B cell (primary cell): ENCODE measurements at regions of chr6 and their contacts with region 1.

Region 1: GRCh38 chr6:119978274-119978889 is 628.8 kb upstream of the MAN1A1 start:
- DNase-seq: peak; percentile 21
- ATAC-seq: no peak
- H3K4me3 ChIP-seq: no peak overlapping the region
- H3K4me3 Mint-ChIP-seq: no peak overlapping the region
- H3K27ac ChIP-seq: no peak overlapping the region
- H3K27ac Mint-ChIP-seq: no peak overlapping the region
- H3K4me1 ChIP-seq: no peaks in the 10 kb centered on the region
- H3K4me1 Mint-ChIP-seq: peaks cover 9% of the 10 kb centered on the region
- H3K27me3 ChIP-seq: no peaks in the 10 kb centered on the region
- H3K27me3 Mint-ChIP-seq: no peaks in the 10 kb centered on the region
- CTCF ChIP-seq: peak; percentile 35

Region 2: DNA sequence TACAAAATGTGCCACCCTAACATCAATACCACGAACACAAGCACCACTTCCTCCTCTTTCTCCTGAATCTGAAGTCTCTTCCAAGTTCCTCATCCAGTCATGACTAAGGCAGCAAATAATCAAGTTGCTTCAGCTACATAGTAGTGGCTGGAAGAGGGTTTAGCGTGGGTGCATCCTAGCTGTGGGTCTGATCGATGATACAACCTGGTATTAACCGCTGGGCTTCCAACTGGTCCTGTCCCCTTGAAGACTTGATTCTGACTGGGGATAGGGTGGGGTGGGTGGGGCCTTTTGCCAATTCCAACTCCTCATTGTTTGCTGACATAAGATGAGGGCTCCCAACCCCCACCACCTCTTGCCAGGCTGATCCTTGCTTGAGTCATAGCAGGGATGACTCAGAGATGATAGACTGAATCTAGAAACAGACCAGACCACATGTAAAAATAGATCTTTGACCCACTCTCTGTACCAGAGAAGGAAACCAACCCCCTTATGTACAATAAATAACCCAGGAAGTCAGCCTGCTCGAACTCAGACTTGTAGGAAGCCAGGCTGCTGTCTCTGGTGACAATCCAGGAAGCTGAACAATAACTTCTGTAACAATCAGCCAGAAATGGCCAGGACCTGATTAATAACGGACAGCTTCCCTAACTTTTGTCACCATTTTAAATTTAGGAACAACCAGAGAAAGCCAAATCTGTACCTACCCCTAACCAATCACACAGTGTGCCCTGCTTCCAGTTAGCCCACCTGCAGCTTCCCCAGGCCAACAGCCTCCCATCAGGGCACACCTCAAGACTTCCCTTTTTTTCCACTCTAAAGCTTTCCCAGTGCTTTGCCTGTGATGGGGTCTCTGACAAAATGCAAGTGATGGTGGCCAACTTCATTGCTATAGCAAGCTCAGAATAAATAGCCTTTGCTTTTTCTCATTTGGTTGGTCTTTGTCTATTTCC is 831.0 kb before region 1 on chr6:
- CTCF ChIA-PET with region 1: interaction called, 3 read pairs
- POLR2A ChIA-PET with region 1: no interaction called
- intact Hi-C with region 1: loop called (anchors 2 kb)
- DNase-seq: no peak
- ATAC-seq: peak; percentile 33
- H3K4me3 ChIP-seq: no peak overlapping the region
- H3K4me3 Mint-ChIP-seq: no peak overlapping the region
- H3K27ac ChIP-seq: no peak overlapping the region
- H3K27ac Mint-ChIP-seq: no peak overlapping the region
- H3K4me1 ChIP-seq: no peaks in the 10 kb centered on the region
- H3K4me1 Mint-ChIP-seq: peaks cover 2% of the 10 kb centered on the region
- H3K27me3 ChIP-seq: no peaks in the 10 kb centered on the region
- H3K27me3 Mint-ChIP-seq: peaks cover 9% of the 10 kb centered on the region
- CTCF ChIP-seq: no peak

Region 3: DNA sequence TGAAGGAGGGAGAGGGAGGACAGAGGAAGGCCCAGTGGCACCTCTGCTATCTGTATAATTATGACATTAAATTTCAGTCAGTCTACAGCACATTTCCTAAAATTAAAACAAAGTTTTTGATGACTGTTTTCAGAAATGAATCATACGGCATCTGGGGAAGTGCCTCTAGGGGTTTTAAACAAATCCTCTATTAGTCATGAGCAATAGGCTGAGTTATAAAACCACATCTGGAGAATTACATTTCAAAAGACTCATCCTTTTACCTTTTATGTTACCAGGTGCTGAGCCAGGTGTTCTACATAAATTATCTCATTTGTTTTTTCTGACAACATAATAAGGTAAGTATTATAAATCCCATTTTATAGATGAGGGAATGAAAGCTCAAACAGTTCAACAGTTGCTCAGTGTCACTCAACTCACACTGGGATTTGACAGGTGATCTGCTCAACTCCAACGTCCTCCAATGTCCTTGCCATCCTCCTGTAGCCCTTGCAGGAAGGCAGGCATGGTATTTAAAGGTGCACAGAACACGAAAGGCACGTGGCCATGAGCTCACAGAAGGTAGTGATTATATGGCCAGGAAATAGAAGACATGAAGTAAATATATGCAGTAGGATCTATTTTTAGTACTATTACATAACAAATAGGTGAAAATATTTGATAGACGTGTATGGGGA is 444.6 kb before region 1 on chr6:
- CTCF ChIA-PET with region 1: no interaction called
- POLR2A ChIA-PET with region 1: no interaction called
- intact Hi-C with region 1: no loop called
- DNase-seq: no peak
- ATAC-seq: no peak
- H3K4me3 ChIP-seq: no peak overlapping the region
- H3K4me3 Mint-ChIP-seq: no peak overlapping the region
- H3K27ac ChIP-seq: no peak overlapping the region
- H3K27ac Mint-ChIP-seq: no peak overlapping the region
- H3K4me1 ChIP-seq: peaks cover 0 to 3% of the 10 kb centered on the region in 2 donors
- H3K4me1 Mint-ChIP-seq: peaks cover 11% of the 10 kb centered on the region
- H3K27me3 ChIP-seq: no peaks in the 10 kb centered on the region
- H3K27me3 Mint-ChIP-seq: no peaks in the 10 kb centered on the region
- CTCF ChIP-seq: no peak

Region 4: GRCh38 chr6:119921491-119922010 is 56.8 kb before region 1 on chr6:
- CTCF ChIA-PET with region 1: no interaction called
- POLR2A ChIA-PET with region 1: no interaction called
- intact Hi-C with region 1: no loop called
- DNase-seq: no peak
- ATAC-seq: no peak
- H3K4me3 ChIP-seq: no peak overlapping the region
- H3K4me3 Mint-ChIP-seq: no peak overlapping the region
- H3K27ac ChIP-seq: no peak overlapping the region
- H3K27ac Mint-ChIP-seq: no peak overlapping the region
- H3K4me1 ChIP-seq: no peaks in the 10 kb centered on the region
- H3K4me1 Mint-ChIP-seq: no peaks in the 10 kb centered on the region
- H3K27me3 ChIP-seq: no peaks in the 10 kb centered on the region
- H3K27me3 Mint-ChIP-seq: no peaks in the 10 kb centered on the region
- CTCF ChIP-seq: no peak

Region 5: DNA sequence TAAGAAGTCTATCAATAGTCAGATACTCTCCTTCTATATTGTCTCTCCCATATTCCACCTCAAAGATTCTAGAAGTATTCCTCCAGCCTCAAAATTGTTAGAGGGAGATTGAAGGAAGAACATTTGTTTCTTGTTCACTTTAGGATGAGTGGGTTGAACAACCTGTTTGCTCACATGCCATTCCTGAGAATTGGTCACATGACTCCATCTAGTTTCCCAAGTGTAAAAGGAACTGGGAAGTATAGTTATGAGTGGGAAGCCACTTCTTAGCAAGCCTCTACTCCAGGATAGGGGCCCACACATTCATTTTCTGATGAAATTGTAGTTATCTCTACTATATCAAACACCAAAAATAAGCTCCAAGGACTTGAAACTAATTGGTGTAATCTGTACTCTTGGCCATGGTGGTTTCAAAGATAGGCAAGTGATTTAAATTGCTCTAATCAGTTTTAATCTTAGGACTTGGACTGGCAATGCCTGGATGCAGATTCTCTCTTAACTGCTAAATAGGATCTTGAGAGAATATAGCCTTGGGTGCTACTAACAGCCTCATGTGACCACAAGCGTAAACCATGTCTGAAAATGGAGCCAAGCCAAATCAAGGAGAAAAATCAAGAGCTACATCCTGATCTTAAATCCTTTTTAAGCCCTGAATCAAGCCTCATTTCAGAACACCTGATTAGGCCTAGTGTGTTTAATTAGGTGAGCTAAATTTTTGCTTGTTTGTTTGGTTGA is 129.8 kb after region 1 on chr6:
- CTCF ChIA-PET with region 1: no interaction called
- POLR2A ChIA-PET with region 1: no interaction called
- intact Hi-C with region 1: no loop called
- DNase-seq: no peak
- ATAC-seq: no peak
- H3K4me3 ChIP-seq: no peak overlapping the region
- H3K4me3 Mint-ChIP-seq: no peak overlapping the region
- H3K27ac ChIP-seq: no peak overlapping the region
- H3K27ac Mint-ChIP-seq: no peak overlapping the region
- H3K4me1 ChIP-seq: no peaks in the 10 kb centered on the region
- H3K4me1 Mint-ChIP-seq: no peaks in the 10 kb centered on the region
- H3K27me3 ChIP-seq: no peaks in the 10 kb centered on the region
- H3K27me3 Mint-ChIP-seq: no peaks in the 10 kb centered on the region
- CTCF ChIP-seq: no peak